ENCODE measurements at regions of chr1 and their contacts with region 1.

Region 1: DNA sequence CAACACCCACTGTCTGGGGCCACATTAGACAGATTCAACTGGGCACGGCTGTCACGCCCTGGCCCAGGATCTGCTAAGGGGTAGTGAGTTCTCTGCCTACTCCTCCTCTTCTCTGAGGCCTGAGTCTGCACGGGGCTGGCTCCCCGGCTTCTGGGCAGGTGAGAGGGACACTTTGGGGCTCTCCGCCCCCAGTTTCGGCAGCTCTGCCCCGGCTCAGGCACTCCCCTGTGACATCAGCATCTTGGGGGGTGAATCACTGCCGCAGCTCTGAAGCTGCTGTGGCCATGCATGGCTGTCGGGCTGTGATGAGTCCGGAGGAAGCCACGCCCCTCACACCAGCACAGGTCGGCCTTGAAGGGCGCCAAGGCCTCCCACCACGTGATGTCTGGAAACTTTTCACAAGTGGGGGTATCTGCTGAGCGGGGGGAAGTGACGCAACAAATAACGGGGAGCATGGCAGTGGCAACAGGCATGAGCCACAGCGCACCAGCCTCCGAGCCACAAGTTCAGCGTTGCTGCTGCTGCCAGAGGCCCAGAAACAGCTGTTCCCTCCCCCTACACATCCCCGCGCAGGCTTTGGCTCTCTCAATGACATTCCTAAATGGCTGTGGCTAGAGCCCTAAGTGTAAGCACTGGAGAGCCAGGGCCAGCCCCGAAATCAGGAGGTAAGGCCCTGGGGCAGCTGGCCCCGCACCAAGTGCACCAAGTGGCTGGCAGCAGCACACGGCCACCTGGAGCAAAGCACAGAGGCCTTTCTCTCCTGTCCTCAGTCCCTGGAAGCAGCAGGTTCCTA is 26.3 kb downstream of the ZBTB17 start:
- DNase-seq: peak; percentile 96 to 97
- ATAC-seq: peak; percentile 88
- H3K4me3 ChIP-seq: no peak overlapping the region
- H3K27ac ChIP-seq: peak overlapping the region; percentile 96 to 99
- H3K4me1 ChIP-seq: peaks cover 0 to 6% of the 10 kb centered on the region in 2 donors
- H3K27me3 ChIP-seq: no peaks in the 10 kb centered on the region

Region 2: GRCh38 chr1:15640667-15641066 is 309.0 kb before region 1 on chr1:
- intact Hi-C with region 1: no loop called
- DNase-seq: no peak
- ATAC-seq: no peak
- H3K4me3 ChIP-seq: no peak overlapping the region
- H3K27ac ChIP-seq: no peak overlapping the region
- H3K4me1 ChIP-seq: no peaks in the 10 kb centered on the region
- H3K27me3 ChIP-seq: no peaks in the 10 kb centered on the region

Region 3: GRCh38 chr1:15835741-15836510 is 113.7 kb before region 1 on chr1:
- intact Hi-C with region 1: loop called in 1 of 2 experiments (anchors 1 kb)
- DNase-seq: peak; percentile 100
- ATAC-seq: peak; percentile 95
- H3K4me3 ChIP-seq: peak overlapping the region; percentile 76 to 85
- H3K27ac ChIP-seq: peak overlapping the region; percentile 93 to 98
- H3K4me1 ChIP-seq: no peaks in the 10 kb centered on the region
- H3K27me3 ChIP-seq: no peaks in the 10 kb centered on the region

Region 4: DNA sequence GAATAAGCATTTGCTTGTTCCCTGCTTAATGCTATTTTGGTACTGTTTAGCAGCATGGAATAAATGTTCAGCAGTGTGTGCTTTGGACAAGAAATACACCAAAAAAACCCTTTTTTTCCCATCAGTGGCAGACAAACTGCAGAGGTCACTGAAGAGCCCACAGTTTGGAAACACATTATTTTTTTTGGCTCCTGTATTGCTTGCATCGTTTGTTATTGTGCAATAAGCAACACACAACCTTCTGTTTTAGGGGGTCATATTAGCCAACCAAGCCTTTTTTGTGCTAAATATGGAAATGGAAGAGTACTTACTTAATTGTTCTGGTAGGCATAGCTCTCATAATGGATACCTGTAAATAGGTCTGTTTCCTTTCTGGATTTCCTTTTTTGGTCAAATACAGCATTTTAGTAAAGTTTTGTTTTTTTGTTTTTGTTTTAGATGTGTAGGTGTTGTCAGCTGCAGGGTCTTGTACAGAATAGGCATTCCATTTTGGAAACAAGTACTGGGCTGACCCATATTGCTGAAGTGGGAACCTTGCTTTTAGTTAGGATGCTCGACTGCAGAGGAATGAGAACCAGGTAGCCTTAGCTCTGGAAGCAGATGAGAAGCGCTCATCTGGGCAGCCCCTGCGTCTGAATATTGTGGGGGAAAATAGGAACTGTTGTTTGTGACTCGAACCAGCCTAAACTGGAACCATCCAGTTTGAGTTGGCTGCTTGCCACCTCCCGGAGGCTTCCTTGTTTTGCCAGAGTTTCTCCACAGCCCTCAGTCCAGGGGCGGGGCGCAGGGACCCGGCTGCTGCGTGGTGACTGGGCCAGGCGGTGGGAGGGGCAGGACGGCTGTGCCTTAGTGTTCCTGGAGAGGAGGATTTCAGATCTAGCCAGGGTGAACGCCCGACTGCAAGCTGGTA is 63.7 kb before region 1 on chr1:
- intact Hi-C with region 1: loop called in 1 of 2 experiments (anchors 5 kb)
- DNase-seq: peak; percentile 99
- ATAC-seq: peak; percentile 97
- H3K4me3 ChIP-seq: peak overlapping the region; percentile 30 to 36
- H3K27ac ChIP-seq: peak overlapping the region; percentile 68 to 99
- H3K4me1 ChIP-seq: peaks cover 5% of the 10 kb centered on the region in 2 donors
- H3K27me3 ChIP-seq: no peaks in the 10 kb centered on the region

Measured in aorta (tissue), 5 donors.